ENCODE measurements at regions of chr6 and their contacts with region 1.

Region 1: DNA sequence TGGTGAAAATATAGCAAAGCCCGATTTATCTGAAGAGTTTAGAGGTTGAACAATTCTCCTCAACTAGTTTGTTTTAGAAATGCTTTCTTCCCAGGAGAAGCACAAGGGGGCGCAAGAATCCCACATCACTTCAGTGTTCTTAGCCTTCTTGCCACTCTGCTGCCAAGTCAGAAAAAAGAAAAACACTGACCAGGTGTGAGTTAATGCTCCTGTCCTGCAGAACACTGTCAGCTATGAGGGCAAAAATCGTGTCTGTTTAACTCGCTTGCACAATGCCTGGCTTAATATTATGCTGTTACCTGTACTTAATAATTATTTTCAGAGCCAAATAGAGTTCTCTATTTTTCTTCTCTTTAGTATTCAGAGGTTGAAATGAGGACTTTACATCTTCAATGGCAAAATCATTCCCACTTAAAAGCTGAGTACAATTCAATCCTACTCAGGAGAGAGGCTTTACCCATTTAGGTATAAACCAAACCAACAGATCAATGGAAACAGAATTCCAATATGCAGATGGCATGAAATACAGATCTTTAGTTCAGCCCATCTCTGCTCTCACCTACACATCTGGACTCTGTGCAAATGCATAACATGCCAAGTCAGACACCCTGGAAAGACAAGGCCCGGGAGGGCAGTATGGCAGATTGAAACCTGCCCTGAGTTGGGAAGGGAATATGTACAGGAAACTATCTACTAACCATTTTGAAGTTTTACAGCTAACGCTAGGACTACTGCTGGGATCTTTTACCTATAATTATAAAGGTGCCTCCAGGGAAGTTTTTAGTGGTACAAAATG is 71.4 kb upstream of the TULP1 start:
- DNase-seq: peak; percentile 53 to 66 (median 63)
- H3K4me3 ChIP-seq: no peak overlapping the region
- H3K4me3 Mint-ChIP-seq: no peak overlapping the region
- H3K27ac ChIP-seq: no peak overlapping the region
- H3K27ac Mint-ChIP-seq: no peak overlapping the region
- H3K4me1 ChIP-seq: peaks cover 22 to 24% of the 10 kb centered on the region in 2 donors
- H3K4me1 Mint-ChIP-seq: peaks cover 27% of the 10 kb centered on the region
- H3K27me3 ChIP-seq: no peaks in the 10 kb centered on the region
- H3K27me3 Mint-ChIP-seq: no peaks in the 10 kb centered on the region
- CTCF ChIP-seq: peak; percentile 85

Region 2: DNA sequence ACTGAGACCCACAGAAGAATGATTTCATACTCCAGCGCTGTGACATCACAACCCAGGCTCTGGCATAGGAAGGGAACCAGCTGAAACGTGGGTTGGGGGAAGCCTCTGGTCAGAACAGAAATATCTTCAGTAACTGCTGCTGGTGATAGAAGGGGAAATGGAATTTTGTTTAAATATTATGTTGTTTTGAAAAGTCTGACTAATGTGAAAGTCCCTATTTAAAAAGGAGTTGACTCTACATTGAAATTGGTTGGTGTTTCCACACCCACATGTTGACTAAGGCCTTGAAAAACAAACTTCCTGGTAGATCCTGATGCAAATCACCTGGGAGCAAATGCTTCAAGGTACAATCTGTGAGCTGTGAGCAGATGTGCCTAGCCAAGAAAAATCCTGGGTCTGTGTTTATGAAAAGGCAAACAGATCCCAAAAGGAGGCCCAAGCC is 418.4 kb before region 1 on chr6:
- intact Hi-C with region 1: no loop called
- DNase-seq: no peak
- H3K4me3 ChIP-seq: no peak overlapping the region
- H3K4me3 Mint-ChIP-seq: no peak overlapping the region
- H3K27ac ChIP-seq: no peak overlapping the region
- H3K27ac Mint-ChIP-seq: no peak overlapping the region
- H3K4me1 ChIP-seq: no peaks in the 10 kb centered on the region
- H3K4me1 Mint-ChIP-seq: no peaks in the 10 kb centered on the region
- H3K27me3 ChIP-seq: no peaks in the 10 kb centered on the region
- H3K27me3 Mint-ChIP-seq: peaks cover 4 to 11% (median 5%) of the 10 kb centered on the region in 3 donors
- CTCF ChIP-seq: no peak

Region 3: GRCh38 chr6:35534407-35535170 is 49.5 kb before region 1 on chr6:
- intact Hi-C with region 1: no loop called
- DNase-seq: no peak
- H3K4me3 ChIP-seq: no peak overlapping the region
- H3K4me3 Mint-ChIP-seq: no peak overlapping the region
- H3K27ac ChIP-seq: no peak overlapping the region
- H3K27ac Mint-ChIP-seq: no peak overlapping the region
- H3K4me1 ChIP-seq: no peaks in the 10 kb centered on the region
- H3K4me1 Mint-ChIP-seq: peaks cover 4% of the 10 kb centered on the region
- H3K27me3 ChIP-seq: no peaks in the 10 kb centered on the region
- H3K27me3 Mint-ChIP-seq: peaks cover 2 to 10% (median 4%) of the 10 kb centered on the region in 3 donors
- CTCF ChIP-seq: no peak

Region 4: DNA sequence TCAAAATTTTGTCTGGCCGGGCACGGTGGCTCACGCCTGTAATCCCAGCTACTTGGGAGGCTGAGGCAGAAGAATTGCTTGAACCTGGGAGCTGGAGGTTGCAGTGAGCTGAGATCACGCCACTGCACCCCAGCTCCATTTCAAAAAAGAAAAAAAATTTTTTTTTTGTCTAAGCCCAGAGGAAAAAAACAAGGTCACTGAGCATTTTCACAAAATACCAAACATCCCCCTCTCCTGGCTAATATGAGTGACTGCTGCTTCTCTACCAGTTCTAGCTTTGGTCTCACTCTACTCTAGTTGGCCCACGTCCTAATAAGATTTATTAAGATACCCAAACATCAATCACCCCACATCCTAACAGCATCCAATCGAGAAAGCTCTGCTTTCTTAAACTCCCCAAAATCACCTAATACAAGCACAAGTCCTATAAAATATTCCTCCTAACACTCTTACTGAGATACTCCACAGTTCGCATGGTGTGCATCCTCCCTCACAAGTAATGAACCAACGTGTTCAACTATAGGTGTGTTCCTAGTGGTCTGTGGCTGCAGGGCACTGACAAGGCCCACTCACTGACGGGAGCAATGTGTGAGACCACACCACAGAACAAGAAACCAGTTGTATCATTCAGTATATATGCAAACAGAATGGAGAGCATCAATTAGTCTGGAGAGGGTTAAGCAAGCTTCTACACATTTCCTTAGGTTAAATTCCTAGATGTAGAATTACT is 40.4 kb after region 1 on chr6:
- intact Hi-C with region 1: loop called in 1 of 2 experiments (anchors 5 kb)
- DNase-seq: no peak
- H3K4me3 ChIP-seq: no peak overlapping the region
- H3K4me3 Mint-ChIP-seq: no peak overlapping the region
- H3K27ac ChIP-seq: peak overlapping the region in 1 of 2 donors; percentile 73
- H3K27ac Mint-ChIP-seq: peak overlapping the region in 4 of 7 donors; percentile 1 to 46 (median 34)
- H3K4me1 ChIP-seq: peaks cover 24 to 29% of the 10 kb centered on the region in 2 donors
- H3K4me1 Mint-ChIP-seq: peaks cover 49% of the 10 kb centered on the region
- H3K27me3 ChIP-seq: no peaks in the 10 kb centered on the region
- H3K27me3 Mint-ChIP-seq: no peaks in the 10 kb centered on the region
- CTCF ChIP-seq: peak; percentile 41

Region 5: GRCh38 chr6:35688581-35689322 is 104.7 kb after region 1 on chr6 and contains the start of gene FKBP5:
- intact Hi-C with region 1: loop called in 1 of 2 experiments (anchors 10 kb)
- DNase-seq: peak; percentile 87 to 92 (median 89)
- H3K4me3 ChIP-seq: peak within 1 kb of the TSS; percentile 83 to 98 (median 98)
- H3K4me3 Mint-ChIP-seq: peak within 1 kb of the TSS; percentile 96 to 97
- H3K27ac ChIP-seq: peak within 1 kb of the TSS; percentile 51 to 80
- H3K27ac Mint-ChIP-seq: peak within 1 kb of the TSS; percentile 87 to 96 (median 94)
- H3K4me1 ChIP-seq: peaks cover 37 to 58% of the 10 kb centered on the region in 2 donors
- H3K4me1 Mint-ChIP-seq: peaks cover 34% of the 10 kb centered on the region
- H3K27me3 ChIP-seq: no peaks in the 10 kb centered on the region
- H3K27me3 Mint-ChIP-seq: peaks cover 0 to 2% (median 1%) of the 10 kb centered on the region in 3 donors
- CTCF ChIP-seq: no peak
- polyA plus RNA-seq, gene FKBP5: 20.2 to 58.5 (median 56.9) TPM

Region 6: GRCh38 chr6:35731736-35732532 is 147.8 kb after region 1 on chr6:
- intact Hi-C with region 1: loop called (anchors 1 to 2 kb)
- DNase-seq: peak; percentile 55 to 59 (median 57)
- H3K4me3 ChIP-seq: peak overlapping the region; percentile 76 to 95 (median 76)
- H3K4me3 Mint-ChIP-seq: peak overlapping the region; percentile 83 to 92
- H3K27ac ChIP-seq: peak overlapping the region; percentile 91 to 92
- H3K27ac Mint-ChIP-seq: peak overlapping the region; percentile 86 to 95 (median 93)
- H3K4me1 ChIP-seq: peaks cover 53 to 71% of the 10 kb centered on the region in 2 donors
- H3K4me1 Mint-ChIP-seq: peaks cover 58% of the 10 kb centered on the region
- H3K27me3 ChIP-seq: no peaks in the 10 kb centered on the region
- H3K27me3 Mint-ChIP-seq: peaks cover 0 to 2% (median 0%) of the 10 kb centered on the region in 3 donors
- CTCF ChIP-seq: no peak

Region 7: DNA sequence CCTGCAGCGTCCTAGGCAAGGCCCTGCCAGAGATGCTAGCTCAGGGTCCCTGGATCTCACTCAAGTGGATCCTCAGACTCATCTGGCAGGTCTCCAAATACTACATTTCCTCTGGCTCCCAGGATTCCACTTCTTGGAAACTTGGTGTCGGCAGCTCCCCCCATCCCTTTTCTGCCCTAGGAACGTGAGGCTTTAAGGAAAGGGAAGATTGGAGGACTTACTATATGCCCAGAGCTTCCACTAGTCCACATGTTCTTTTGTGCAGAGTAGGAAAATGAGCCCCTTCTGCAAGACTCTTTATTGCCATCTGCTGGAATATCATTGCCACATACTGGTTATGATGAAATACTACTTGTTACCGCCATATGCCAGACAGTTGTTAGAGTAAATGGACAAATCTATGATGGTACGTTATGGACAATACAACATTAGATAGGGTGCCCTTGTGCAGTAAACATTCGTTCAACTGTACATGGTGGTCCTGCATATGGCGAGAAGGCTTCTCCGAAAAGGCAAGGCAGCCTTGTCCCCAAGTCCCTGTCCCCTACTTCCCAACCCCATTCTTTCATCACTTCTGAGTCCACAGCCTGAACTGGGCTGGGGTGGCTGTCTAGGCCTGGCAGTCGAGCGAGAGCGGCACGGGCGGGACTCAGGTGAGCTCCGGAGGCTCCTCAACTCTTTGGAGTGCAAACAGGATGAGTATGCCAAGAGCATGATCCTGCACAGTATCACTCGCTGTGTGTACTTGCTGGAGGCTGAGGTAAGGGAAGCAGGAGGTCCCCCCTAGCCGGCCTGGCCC is 153.5 kb after region 1 on chr6:
- intact Hi-C with region 1: loop called (anchors 1 to 2 kb)
- DNase-seq: peak; percentile 61 to 79 (median 75)
- H3K4me3 ChIP-seq: no peak overlapping the region
- H3K4me3 Mint-ChIP-seq: no peak overlapping the region
- H3K27ac ChIP-seq: no peak overlapping the region
- H3K27ac Mint-ChIP-seq: peak overlapping the region in 3 of 7 donors; percentile 45 to 84 (median 73)
- H3K4me1 ChIP-seq: peaks cover 15 to 34% of the 10 kb centered on the region in 2 donors
- H3K4me1 Mint-ChIP-seq: peaks cover 24% of the 10 kb centered on the region
- H3K27me3 ChIP-seq: no peaks in the 10 kb centered on the region
- H3K27me3 Mint-ChIP-seq: no peaks in the 10 kb centered on the region
- CTCF ChIP-seq: peak; percentile 78

Region 8: GRCh38 chr6:35824552-35825192 is 240.6 kb after region 1 on chr6:
- intact Hi-C with region 1: no loop called
- DNase-seq: no peak
- H3K4me3 ChIP-seq: no peak overlapping the region
- H3K4me3 Mint-ChIP-seq: no peak overlapping the region
- H3K27ac ChIP-seq: no peak overlapping the region
- H3K27ac Mint-ChIP-seq: no peak overlapping the region
- H3K4me1 ChIP-seq: no peaks in the 10 kb centered on the region
- H3K4me1 Mint-ChIP-seq: no peaks in the 10 kb centered on the region
- H3K27me3 ChIP-seq: no peaks in the 10 kb centered on the region
- H3K27me3 Mint-ChIP-seq: peaks cover 7 to 9% (median 7%) of the 10 kb centered on the region in 3 donors
- CTCF ChIP-seq: no peak

Region 9: GRCh38 chr6:37207903-37208456 is 1623.9 kb after region 1 on chr6:
- intact Hi-C with region 1: no loop called
- DNase-seq: peak; percentile 79 to 83 (median 81)
- H3K4me3 ChIP-seq: no peak overlapping the region
- H3K4me3 Mint-ChIP-seq: peak overlapping the region; percentile 39 to 61
- H3K27ac ChIP-seq: no peak overlapping the region
- H3K27ac Mint-ChIP-seq: peak overlapping the region in 5 of 7 donors; percentile 19 to 77 (median 58)
- H3K4me1 ChIP-seq: peaks cover 22 to 24% of the 10 kb centered on the region in 2 donors
- H3K4me1 Mint-ChIP-seq: peaks cover 38% of the 10 kb centered on the region
- H3K27me3 ChIP-seq: no peaks in the 10 kb centered on the region
- H3K27me3 Mint-ChIP-seq: peaks cover 0 to 5% (median 0%) of the 10 kb centered on the region in 3 donors
- CTCF ChIP-seq: peak; percentile 93

Measured in CD14-positive monocyte (primary cell).